CD8-positive, alpha-beta T cell (primary cell): ENCODE measurements at regions of chr3 and their contacts with region 1.

Region 1: DNA sequence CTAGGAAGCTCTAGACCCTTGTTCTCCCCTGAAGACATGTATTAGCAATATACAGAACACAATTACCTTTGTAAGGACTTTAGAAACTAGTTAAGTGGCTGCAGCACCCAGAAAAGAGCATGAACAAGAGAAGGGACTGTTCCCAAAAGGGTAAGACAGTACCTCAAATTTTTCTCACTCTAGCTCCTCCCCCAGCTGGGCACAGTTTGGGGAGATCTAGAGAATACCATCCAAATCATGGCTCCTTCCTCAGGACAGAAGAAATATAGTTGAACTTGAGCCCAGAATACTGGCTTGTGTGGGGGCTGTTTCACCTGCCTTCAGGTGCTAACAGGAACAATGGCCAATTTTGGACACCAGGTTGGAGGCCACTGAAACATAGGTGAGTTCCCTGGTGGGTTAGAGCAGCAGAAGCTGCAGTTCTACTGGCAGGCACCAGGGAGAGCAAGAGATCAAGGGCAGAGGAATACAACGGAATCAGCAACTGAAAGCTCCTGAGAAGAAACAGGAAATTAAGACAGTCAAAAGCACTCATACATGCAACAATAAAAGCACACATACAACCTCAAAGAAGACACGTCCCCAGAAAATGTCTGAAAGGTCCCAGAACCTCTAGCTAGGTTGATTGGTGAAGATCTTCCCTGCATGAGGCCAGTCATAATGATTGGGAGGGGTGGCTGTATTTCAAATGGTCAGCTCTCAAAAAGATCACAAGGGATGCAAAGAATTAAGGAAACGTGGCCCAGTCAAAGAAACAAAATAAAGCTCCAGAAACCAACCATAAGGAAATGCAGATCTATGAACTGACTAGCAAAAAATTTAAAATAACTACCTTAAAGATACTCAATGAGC is 104.9 kb upstream of the ASB14 start:
- DNase-seq: peak; percentile 16 to 76 (median 53)
- ATAC-seq: peak; percentile 98
- H3K4me3 ChIP-seq: peak overlapping the region in 1 of 2 experiments; percentile 6
- H3K4me3 Mint-ChIP-seq: peak overlapping the region; percentile 50
- H3K27ac ChIP-seq: no peak overlapping the region
- H3K27ac Mint-ChIP-seq: peak overlapping the region; percentile 38
- H3K4me1 ChIP-seq: peaks cover 8% of the 10 kb centered on the region
- H3K4me1 Mint-ChIP-seq: peaks cover 15% of the 10 kb centered on the region
- H3K27me3 ChIP-seq: no peaks in the 10 kb centered on the region
- H3K27me3 Mint-ChIP-seq: peaks cover 3% of the 10 kb centered on the region
- CTCF ChIP-seq: peak; percentile 87

Region 2: GRCh38 chr3:57555738-57556458 is 158.5 kb after region 1 on chr3 and contains the start of gene PDE12:
- CTCF ChIA-PET with region 1: no interaction called
- POLR2A ChIA-PET with region 1: interaction called, 3 read pairs
- intact Hi-C with region 1: loop called in 1 of 2 experiments (anchors 10 kb)
- DNase-seq: peak; percentile 66 to 91 (median 81)
- ATAC-seq: peak; percentile 69
- H3K4me3 ChIP-seq: peak within 1 kb of the TSS; percentile 77 to 96
- H3K4me3 Mint-ChIP-seq: peak within 1 kb of the TSS; percentile 88
- H3K27ac ChIP-seq: peak within 1 kb of the TSS; percentile 87 to 98
- H3K27ac Mint-ChIP-seq: peak within 1 kb of the TSS; percentile 99
- H3K4me1 ChIP-seq: peaks cover 31% of the 10 kb centered on the region
- H3K4me1 Mint-ChIP-seq: peaks cover 40% of the 10 kb centered on the region
- H3K27me3 ChIP-seq: no peaks in the 10 kb centered on the region
- H3K27me3 Mint-ChIP-seq: no peaks in the 10 kb centered on the region
- CTCF ChIP-seq: no peak
- total RNA-seq, gene PDE12: 44.8 to 45.9 TPM

Region 3: GRCh38 chr3:57627976-57628375 is 230.6 kb after region 1 on chr3:
- CTCF ChIA-PET with region 1: no interaction called
- POLR2A ChIA-PET with region 1: no interaction called
- intact Hi-C with region 1: loop called in 1 of 2 experiments (anchors 10 kb)
- DNase-seq: no peak
- ATAC-seq: no peak
- H3K4me3 ChIP-seq: no peak overlapping the region
- H3K4me3 Mint-ChIP-seq: no peak overlapping the region
- H3K27ac ChIP-seq: no peak overlapping the region
- H3K27ac Mint-ChIP-seq: no peak overlapping the region
- H3K4me1 ChIP-seq: no peaks in the 10 kb centered on the region
- H3K4me1 Mint-ChIP-seq: no peaks in the 10 kb centered on the region
- H3K27me3 ChIP-seq: no peaks in the 10 kb centered on the region
- H3K27me3 Mint-ChIP-seq: no peaks in the 10 kb centered on the region
- CTCF ChIP-seq: no peak

Region 4: GRCh38 chr3:57852896-57853295 is 455.5 kb after region 1 on chr3:
- CTCF ChIA-PET with region 1: interaction called, 14 read pairs
- POLR2A ChIA-PET with region 1: no interaction called
- intact Hi-C with region 1: loop called (anchors 2 to 5 kb)
- DNase-seq: peak in 1 of 9 experiments; percentile 3
- ATAC-seq: no peak
- H3K4me3 ChIP-seq: no peak overlapping the region
- H3K4me3 Mint-ChIP-seq: no peak overlapping the region
- H3K27ac ChIP-seq: no peak overlapping the region
- H3K27ac Mint-ChIP-seq: no peak overlapping the region
- H3K4me1 ChIP-seq: no peaks in the 10 kb centered on the region
- H3K4me1 Mint-ChIP-seq: no peaks in the 10 kb centered on the region
- H3K27me3 ChIP-seq: no peaks in the 10 kb centered on the region
- H3K27me3 Mint-ChIP-seq: no peaks in the 10 kb centered on the region
- CTCF ChIP-seq: peak; percentile 25

Region 5: GRCh38 chr3:58177747-58178527 is 780.5 kb after region 1 on chr3:
- CTCF ChIA-PET with region 1: no interaction called
- POLR2A ChIA-PET with region 1: no interaction called
- intact Hi-C with region 1: loop called in 1 of 2 experiments (anchors 10 kb)
- DNase-seq: peak; percentile 74 to 95 (median 87)
- ATAC-seq: peak; percentile 94
- H3K4me3 ChIP-seq: peak overlapping the region; percentile 34 to 48
- H3K4me3 Mint-ChIP-seq: peak overlapping the region; percentile 69
- H3K27ac ChIP-seq: no peak overlapping the region
- H3K27ac Mint-ChIP-seq: no peak overlapping the region
- H3K4me1 ChIP-seq: peaks cover 14% of the 10 kb centered on the region
- H3K4me1 Mint-ChIP-seq: peaks cover 13% of the 10 kb centered on the region
- H3K27me3 ChIP-seq: peaks cover 0 to 2% of the 10 kb centered on the region in 2 experiments
- H3K27me3 Mint-ChIP-seq: peaks cover 9% of the 10 kb centered on the region
- CTCF ChIP-seq: peak; percentile 79